ENCODE measurements at regions of chr1 and their contacts with region 1.

Region 1: GRCh38 chr1:100037927-100038659 is 68.3 kb downstream of the SLC35A3 start:
- DNase-seq: peak; percentile 87
- H3K4me3 ChIP-seq: peak overlapping the region; percentile 59 to 95 (median 93)
- H3K27ac ChIP-seq: peak overlapping the region; percentile 97
- H3K4me1 ChIP-seq: peaks cover 6% of the 10 kb centered on the region
- H3K27me3 ChIP-seq: no peaks in the 10 kb centered on the region
- CTCF ChIP-seq: no peak

Region 2: GRCh38 chr1:99849744-99850458 is 188.2 kb before region 1 on chr1 and contains the start of gene AGL:
- CTCF ChIA-PET with region 1: no interaction called
- dilution Hi-C with region 1: no loop called
- in situ Hi-C with region 1: no loop called
- intact Hi-C with region 1: loop called (anchors 5 kb)
- DNase-seq: peak; percentile 84
- H3K4me3 ChIP-seq: peak within 1 kb of the TSS; percentile 88 to 90 (median 88)
- H3K27ac ChIP-seq: peak within 1 kb of the TSS; percentile 42
- H3K4me1 ChIP-seq: peaks cover 7% of the 10 kb centered on the region
- H3K27me3 ChIP-seq: no peaks in the 10 kb centered on the region
- CTCF ChIP-seq: no peak
- total RNA-seq, gene AGL: 15.6 to 31.3 TPM

Region 3: DNA sequence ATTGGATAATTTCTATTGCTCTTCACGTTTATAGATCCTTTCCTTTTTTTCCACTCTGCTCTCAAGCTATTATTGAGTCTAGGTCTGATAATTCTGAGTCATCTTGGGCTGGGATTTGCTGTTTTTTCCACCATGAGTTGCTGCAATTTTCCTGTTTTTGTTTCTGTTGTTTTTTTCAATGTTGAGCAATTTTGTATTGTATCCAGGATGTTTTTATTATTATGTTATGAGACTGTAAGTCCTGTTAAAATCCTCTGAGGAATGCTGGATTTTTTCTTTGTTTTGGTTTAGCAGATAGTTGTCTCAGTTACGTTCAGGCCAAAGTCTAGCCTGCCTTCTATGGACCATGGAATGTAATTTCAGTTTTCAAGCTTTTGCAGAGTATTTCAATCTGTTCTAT is 81.3 kb before region 1 on chr1:
- CTCF ChIA-PET with region 1: no interaction called
- dilution Hi-C with region 1: no loop called
- in situ Hi-C with region 1: no loop called
- intact Hi-C with region 1: no loop called
- DNase-seq: no peak
- H3K4me3 ChIP-seq: no peak overlapping the region
- H3K27ac ChIP-seq: no peak overlapping the region
- H3K4me1 ChIP-seq: no peaks in the 10 kb centered on the region
- H3K27me3 ChIP-seq: no peaks in the 10 kb centered on the region
- CTCF ChIP-seq: no peak

Region 4: DNA sequence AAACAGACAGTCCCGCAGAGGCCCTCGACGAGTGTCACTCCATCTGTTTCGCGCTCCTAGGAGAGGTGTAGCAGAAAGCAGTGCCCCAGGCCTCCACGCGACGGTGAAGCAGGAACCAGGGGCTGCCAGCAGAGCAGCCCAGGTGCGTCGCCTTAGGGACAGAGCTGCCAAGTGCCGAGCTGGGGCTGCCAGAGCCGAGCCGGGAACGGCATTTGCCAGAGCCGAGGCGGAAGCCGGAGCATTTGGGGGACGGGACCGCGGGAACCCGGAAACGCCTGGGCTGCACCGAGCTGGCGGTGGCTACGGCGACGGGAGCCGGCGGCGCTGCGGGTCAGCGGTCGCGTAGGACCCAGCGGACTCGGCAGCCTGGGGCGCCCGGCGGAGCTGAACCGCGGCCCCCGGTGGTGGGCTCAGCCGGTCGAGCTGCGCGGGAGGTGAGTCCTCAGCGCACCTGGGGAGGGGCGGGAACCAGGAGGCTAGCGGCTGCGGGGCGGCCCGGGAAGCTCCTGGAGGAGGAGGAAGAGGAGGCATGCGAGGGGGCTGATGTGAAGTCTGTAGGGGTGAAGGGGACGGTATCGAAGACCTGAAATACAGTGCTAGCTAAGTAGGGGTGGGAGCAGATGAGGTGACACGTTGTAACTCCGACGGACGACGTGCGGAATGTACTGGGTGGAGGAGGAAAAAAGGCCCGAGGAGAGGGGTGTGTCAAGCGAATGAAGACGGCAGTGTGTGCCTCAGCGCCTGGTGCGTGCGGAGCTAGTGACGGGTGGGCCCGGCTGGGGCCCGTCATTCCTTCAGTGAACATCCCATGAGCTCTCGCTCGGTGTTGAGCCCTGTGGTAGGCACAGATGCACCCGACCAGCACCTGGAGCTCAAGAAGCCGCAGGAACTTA is 68.1 kb before region 1 on chr1 and contains the start of gene SLC35A3:
- CTCF ChIA-PET with region 1: no interaction called
- dilution Hi-C with region 1: no loop called
- in situ Hi-C with region 1: no loop called
- intact Hi-C with region 1: loop called (anchors 2 kb)
- DNase-seq: peak; percentile 77
- H3K4me3 ChIP-seq: peak within 1 kb of the TSS; percentile 50 to 90 (median 69)
- H3K27ac ChIP-seq: peak within 1 kb of the TSS; percentile 84
- H3K4me1 ChIP-seq: peaks cover 13% of the 10 kb centered on the region
- H3K27me3 ChIP-seq: no peaks in the 10 kb centered on the region
- CTCF ChIP-seq: no peak
- total RNA-seq, gene SLC35A3: 29.5 to 46.2 TPM

Region 5: GRCh38 chr1:100051401-100051800 is 13.3 kb after region 1 on chr1:
- CTCF ChIA-PET with region 1: interaction called, 3 read pairs
- dilution Hi-C with region 1: no loop called
- in situ Hi-C with region 1: no loop called
- intact Hi-C with region 1: loop called (anchors 1 kb)
- DNase-seq: no peak
- H3K4me3 ChIP-seq: no peak overlapping the region
- H3K27ac ChIP-seq: no peak overlapping the region
- H3K4me1 ChIP-seq: peaks cover 30% of the 10 kb centered on the region
- H3K27me3 ChIP-seq: no peaks in the 10 kb centered on the region
- CTCF ChIP-seq: no peak

Region 6: GRCh38 chr1:100132566-100133477 is 94.7 kb after region 1 on chr1 and contains the starts of genes SASS6 and TRMT13:
- CTCF ChIA-PET with region 1: no interaction called
- dilution Hi-C with region 1: no loop called
- in situ Hi-C with region 1: no loop called
- intact Hi-C with region 1: loop called (anchors 1 kb)
- DNase-seq: peak; percentile 97
- H3K4me3 ChIP-seq: peak within 1 kb of the TSS; percentile 77 to 91 (median 90)
- H3K27ac ChIP-seq: peak within 1 kb of the TSS; percentile 54
- H3K4me1 ChIP-seq: peaks cover 6% of the 10 kb centered on the region
- H3K27me3 ChIP-seq: no peaks in the 10 kb centered on the region
- CTCF ChIP-seq: no peak
- total RNA-seq, gene SASS6: 2.8 to 6.0 TPM
- total RNA-seq, gene TRMT13: 11.0 to 14.3 TPM

Region 7: GRCh38 chr1:100351095-100351891 is 313.2 kb after region 1 on chr1:
- CTCF ChIA-PET with region 1: no interaction called
- dilution Hi-C with region 1: no loop called
- in situ Hi-C with region 1: no loop called
- intact Hi-C with region 1: loop called (anchors 10 kb)
- DNase-seq: peak; percentile 93
- H3K4me3 ChIP-seq: peak overlapping the region; percentile 84 to 94 (median 88)
- H3K27ac ChIP-seq: peak overlapping the region; percentile 77
- H3K4me1 ChIP-seq: peaks cover 15% of the 10 kb centered on the region
- H3K27me3 ChIP-seq: no peaks in the 10 kb centered on the region
- CTCF ChIP-seq: peak; percentile 16 to 18

Region 8: DNA sequence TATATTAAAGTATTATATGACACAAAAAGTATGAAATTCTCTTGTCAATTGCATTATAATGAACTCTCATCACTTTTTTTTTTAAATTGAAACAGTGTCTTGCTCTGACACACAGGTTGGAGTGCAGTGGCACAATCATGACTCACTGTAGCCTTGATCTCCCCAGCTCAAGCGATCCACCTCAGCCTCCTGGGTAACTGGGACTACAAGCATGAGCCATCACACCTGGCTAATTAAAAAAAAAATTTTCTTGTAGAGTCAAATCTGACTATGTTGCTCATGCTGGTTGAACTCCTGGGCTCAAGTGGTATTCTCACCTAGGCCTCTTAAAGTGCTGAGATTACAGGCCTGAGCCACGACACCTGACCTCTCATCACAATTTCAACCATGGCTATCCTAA is 1458.0 kb after region 1 on chr1:
- CTCF ChIA-PET with region 1: no interaction called
- dilution Hi-C with region 1: no loop called
- in situ Hi-C with region 1: no loop called
- intact Hi-C with region 1: no loop called
- DNase-seq: peak; percentile 84
- H3K4me3 ChIP-seq: no peak overlapping the region
- H3K27ac ChIP-seq: no peak overlapping the region
- H3K4me1 ChIP-seq: peaks cover 11% of the 10 kb centered on the region
- H3K27me3 ChIP-seq: no peaks in the 10 kb centered on the region
- CTCF ChIP-seq: no peak